A549 (cell line): ENCODE measurements at regions of chr1 and their contacts with region 1.

Region 1: GRCh38 chr1:21520899-21521716 is 11.9 kb downstream of the ALPL start:
- DNase-seq: no peak
- ATAC-seq: no peak
- H3K4me3 ChIP-seq: no peak overlapping the region
- H3K27ac ChIP-seq: no peak overlapping the region
- H3K4me1 ChIP-seq: no peaks in the 10 kb centered on the region
- CTCF ChIP-seq: no peak
- EP300 ChIP-seq: no peak
- POLR2A ChIP-seq: no peak
- RAD21 ChIP-seq: no peak

Region 2: DNA sequence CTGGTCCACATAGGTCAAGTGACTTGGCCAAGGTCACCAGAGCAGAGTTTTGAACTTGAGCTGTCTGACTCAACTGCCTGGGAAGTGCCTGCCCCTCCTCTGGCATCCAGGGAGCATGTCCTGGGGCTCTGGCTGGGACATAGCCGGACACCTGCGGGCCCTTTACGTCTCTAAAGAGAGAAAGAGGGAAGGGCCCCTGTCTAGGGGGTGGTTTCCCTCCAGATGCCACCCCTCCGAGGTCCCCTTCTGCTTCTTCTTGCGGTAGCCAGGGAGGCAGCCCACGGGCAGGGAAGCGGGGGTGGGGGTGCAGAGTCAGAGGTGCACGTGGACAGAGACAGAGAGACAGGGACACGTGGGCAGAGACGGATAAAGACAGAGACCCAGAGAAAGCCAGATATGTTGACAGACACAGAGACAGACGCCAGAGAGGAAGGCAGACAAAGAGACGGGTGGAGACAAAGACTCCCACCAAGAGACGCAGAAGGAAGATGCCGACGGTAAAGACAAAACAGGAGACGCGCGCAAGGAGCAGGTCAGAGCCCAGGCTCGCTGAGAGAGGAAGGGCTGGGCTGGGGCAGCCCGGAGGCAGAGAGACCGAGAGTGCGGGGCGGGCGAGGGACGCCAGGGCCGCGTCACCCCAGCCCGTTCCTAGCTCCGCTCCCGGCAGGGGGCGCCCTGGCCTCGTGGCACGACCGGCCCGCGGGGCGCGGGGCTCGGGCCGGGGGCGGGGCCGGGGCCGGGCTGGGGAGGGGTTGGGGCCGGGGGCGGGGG is 12.3 kb before region 1 on chr1:
- CTCF ChIA-PET with region 1: interaction called, 20 read pairs
- POLR2A ChIA-PET with region 1: no interaction called
- DNase-seq: peak; percentile 30 to 62
- ATAC-seq: peak; percentile 88 to 91
- H3K4me3 ChIP-seq: peak overlapping the region; percentile 41
- H3K27ac ChIP-seq: peak overlapping the region in 1 of 2 experiments; percentile 58; a peak in 3 of 6 replicates
- H3K4me1 ChIP-seq: no peaks in the 10 kb centered on the region
- CTCF ChIP-seq: peak; percentile 72
- EP300 ChIP-seq: no peak
- POLR2A ChIP-seq: no peak
- RAD21 ChIP-seq: peak; percentile 52 to 75

Region 3: GRCh38 chr1:21534674-21535378 is 13.7 kb after region 1 on chr1:
- CTCF ChIA-PET with region 1: interaction called, 10 read pairs
- POLR2A ChIA-PET with region 1: no interaction called
- DNase-seq: peak; percentile 54 to 60
- ATAC-seq: peak; percentile 90 to 95
- H3K4me3 ChIP-seq: no peak overlapping the region
- H3K27ac ChIP-seq: no peak overlapping the region
- H3K4me1 ChIP-seq: no peaks in the 10 kb centered on the region
- CTCF ChIP-seq: peak; percentile 44
- EP300 ChIP-seq: no peak
- POLR2A ChIP-seq: no peak
- RAD21 ChIP-seq: peak; percentile 46 to 48; a peak in 4 of 5 replicates

Region 4: DNA sequence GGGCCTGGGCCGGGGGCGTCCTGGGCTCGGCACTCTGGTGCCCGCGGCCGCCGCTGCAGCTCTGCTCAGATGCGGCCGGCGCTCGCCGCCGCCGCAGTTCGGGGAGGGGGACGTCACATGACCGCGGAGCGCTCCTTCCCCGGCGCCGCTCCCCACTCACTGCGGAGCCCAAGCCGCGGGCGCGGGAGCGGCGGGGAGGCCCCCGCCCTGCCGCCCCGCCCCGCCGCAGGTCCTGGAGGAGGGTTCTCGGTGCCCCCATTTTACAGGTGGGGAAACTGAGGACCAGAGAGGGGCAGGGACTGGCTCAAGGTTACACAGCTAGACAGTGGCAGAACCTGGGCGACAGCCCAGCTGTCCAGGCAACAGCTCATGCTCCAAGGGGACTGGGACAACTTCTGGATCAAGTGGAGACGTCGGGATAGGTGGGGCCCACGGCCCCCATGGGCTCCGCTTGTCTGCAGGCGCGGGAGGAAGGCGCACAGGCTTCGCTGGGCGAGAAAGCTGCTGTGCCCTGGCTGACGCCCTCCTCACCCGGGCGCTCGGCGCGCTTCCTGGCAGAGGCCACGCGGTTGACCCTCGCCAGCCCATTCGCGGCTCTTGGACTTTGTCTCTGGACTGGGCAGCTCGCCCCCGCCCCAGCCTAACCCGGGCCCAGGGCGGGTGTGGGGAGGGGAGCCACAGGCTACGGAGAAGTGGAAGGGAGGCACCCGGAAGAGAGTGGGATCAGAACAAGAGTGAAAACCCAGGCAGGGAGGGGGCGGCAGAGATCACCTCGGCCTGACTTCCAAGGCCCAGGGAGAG is 148.3 kb after region 1 on chr1 and contains the start of gene RAP1GAP:
- CTCF ChIA-PET with region 1: no interaction called
- POLR2A ChIA-PET with region 1: no interaction called
- DNase-seq: no peak
- ATAC-seq: peak in 1 of 2 experiments; percentile 41; a peak in 3 of 6 replicates
- H3K4me3 ChIP-seq: peak within 1 kb of the TSS; percentile 45
- H3K27ac ChIP-seq: peak within 1 kb of the TSS; percentile 33 to 72; a peak in 4 of 6 replicates
- H3K4me1 ChIP-seq: 0 out of 3 replicates have a peak, but pooled peaks cover 3% of the 10 kb centered on the region
- CTCF ChIP-seq: no peak
- EP300 ChIP-seq: no peak
- POLR2A ChIP-seq: no peak
- RAD21 ChIP-seq: no peak
- polyA plus RNA-seq, gene RAP1GAP: 16.7 and 21.4 TPM in 2 replicates